ENCODE measurements at regions of chr15 and their contacts with region 1.

Region 1: DNA sequence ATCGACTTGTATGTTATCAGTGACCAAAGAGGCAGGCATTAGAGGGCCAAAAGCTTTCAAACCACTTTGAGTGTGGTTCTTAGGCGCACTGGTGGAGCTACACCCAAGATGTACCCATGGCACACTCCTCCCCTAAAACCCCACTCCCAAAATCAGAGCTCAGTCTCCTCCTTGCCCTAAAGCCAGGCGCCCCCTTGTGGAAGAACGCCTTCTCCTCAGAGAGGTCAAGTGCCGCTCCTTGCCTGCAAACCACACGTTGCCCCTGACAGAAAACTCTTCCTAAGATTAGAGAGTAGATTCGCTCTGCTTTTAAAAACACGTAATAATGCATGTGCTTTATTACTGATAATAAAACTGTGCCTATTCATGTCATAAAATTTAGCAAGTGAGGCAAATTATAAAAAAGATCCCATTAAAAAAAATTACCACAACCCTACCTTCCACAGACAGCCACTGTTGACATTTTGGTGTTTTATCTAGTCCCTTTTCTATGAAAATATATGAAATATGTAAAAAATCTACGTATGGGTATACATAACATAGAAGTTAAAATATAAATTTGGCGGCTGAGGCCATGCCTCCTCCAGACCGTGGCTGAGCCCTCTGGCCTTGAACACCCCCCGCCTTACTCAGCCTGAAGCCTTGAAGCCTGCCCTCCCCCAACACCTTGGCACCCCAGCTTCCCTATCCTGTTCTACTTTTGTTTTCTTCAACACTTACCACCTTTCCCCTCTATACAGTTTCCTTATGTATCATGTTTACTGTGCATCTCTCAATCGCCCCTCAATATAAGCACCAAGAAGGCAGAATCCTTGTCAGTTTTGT is 33.5 kb downstream of the BCL2L10 start:
- DNase-seq: peak; percentile 75 to 90
- ATAC-seq: peak; percentile 69 to 90 (median 78)
- H3K4me3 ChIP-seq: no peak overlapping the region
- H3K27ac ChIP-seq: no peak overlapping the region
- H3K4me1 ChIP-seq: no peaks in the 10 kb centered on the region
- H3K27me3 ChIP-seq: no peaks in the 10 kb centered on the region
- CTCF ChIP-seq: peak; percentile 78

Region 2: GRCh38 chr15:51335538-51336321 is 743.4 kb before region 1 on chr15:
- intact Hi-C with region 1: no loop called
- DNase-seq: no peak
- ATAC-seq: no peak
- H3K4me3 ChIP-seq: no peak overlapping the region
- H3K27ac ChIP-seq: no peak overlapping the region
- H3K4me1 ChIP-seq: no peaks in the 10 kb centered on the region
- H3K27me3 ChIP-seq: peaks cover 0 to 2% (median 0%) of the 10 kb centered on the region in 3 donors
- CTCF ChIP-seq: no peak

Region 3: GRCh38 chr15:51971375-51972133 is 107.5 kb before region 1 on chr15 and contains the start of gene LEO1:
- intact Hi-C with region 1: loop called in 1 of 2 experiments (anchors 5 kb)
- DNase-seq: peak; percentile 87 to 92
- ATAC-seq: peak; percentile 96 to 98 (median 98)
- H3K4me3 ChIP-seq: peak within 1 kb of the TSS; percentile 100
- H3K27ac ChIP-seq: peak within 1 kb of the TSS; percentile 94
- H3K4me1 ChIP-seq: peaks cover 11% of the 10 kb centered on the region
- H3K27me3 ChIP-seq: no peaks in the 10 kb centered on the region
- CTCF ChIP-seq: peak; percentile 45
- total RNA-seq, gene LEO1: 6.2 to 10.2 (median 7.1) TPM

Region 4: DNA sequence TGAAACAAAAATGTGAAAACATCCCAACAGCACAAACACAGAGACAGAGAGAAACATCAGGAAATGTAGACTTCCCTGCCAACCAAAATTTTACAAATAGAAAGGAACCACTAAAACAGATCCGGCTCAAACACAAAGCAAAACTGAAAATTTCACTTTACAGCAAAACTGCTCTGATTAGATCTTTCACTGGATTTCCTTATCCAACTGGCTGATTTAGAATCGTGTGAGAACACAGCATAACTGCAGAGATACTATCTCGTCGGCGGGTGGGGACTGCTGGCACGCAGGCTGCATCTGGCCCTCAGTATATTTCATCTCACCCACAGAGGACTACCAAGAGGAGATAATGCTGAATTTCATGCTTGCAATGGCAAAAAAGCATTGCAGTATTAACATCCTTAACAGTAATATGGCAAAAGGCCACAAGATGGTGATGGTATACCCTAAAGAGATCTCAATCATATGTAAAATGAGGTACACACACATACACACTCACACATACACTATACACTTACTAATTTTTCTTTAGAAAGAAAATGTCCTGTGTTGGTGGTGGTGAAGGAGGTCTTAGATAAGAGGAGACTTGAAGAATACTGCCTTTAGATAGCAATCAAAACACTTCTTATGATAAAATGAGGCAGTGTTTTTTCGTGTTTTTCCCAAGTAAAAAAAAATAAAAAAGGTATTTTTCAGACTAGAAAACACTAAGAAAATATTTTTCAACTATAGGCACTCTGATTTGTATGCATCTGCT is 96.9 kb before region 1 on chr15:
- intact Hi-C with region 1: loop called in 1 of 2 experiments (anchors 5 kb)
- DNase-seq: peak; percentile 25 to 54
- ATAC-seq: peak in 3 of 4 donors; percentile 62 to 78 (median 69)
- H3K4me3 ChIP-seq: peak overlapping the region; percentile 49
- H3K27ac ChIP-seq: peak overlapping the region; percentile 53
- H3K4me1 ChIP-seq: peaks cover 15% of the 10 kb centered on the region
- H3K27me3 ChIP-seq: no peaks in the 10 kb centered on the region
- CTCF ChIP-seq: peak; percentile 34

Region 5: GRCh38 chr15:52018693-52019387 is 60.2 kb before region 1 on chr15 and contains the start of gene MAPK6:
- intact Hi-C with region 1: loop called (anchors 5 to 10 kb)
- DNase-seq: peak; percentile 96 to 97
- ATAC-seq: peak; percentile 89 to 95 (median 92)
- H3K4me3 ChIP-seq: peak within 1 kb of the TSS; percentile 65
- H3K27ac ChIP-seq: peak within 1 kb of the TSS; percentile 83
- H3K4me1 ChIP-seq: peaks cover 32% of the 10 kb centered on the region
- H3K27me3 ChIP-seq: no peaks in the 10 kb centered on the region
- CTCF ChIP-seq: no peak
- total RNA-seq, gene MAPK6: 29.4 to 58.5 (median 47.7) TPM

Region 6: DNA sequence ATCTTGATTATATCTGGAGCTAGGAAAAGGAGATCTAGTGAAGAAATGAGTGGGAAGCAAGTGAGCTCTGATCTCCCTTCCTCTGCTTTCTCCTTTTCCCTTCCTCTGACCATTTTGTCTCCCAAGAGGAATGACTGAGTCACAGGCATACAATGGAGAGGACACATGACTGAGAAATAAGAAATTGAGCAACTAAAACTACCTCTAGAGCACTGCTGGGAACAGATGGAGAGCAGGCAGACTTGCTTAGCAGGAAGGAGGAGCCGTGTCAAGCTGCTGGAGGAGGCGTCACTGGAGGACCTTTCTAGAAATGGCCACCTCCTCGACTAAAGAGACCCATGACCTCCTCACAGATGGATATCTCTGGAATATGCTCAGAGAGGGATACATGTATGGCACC is 283.4 kb after region 1 on chr15:
- intact Hi-C with region 1: no loop called
- DNase-seq: no peak
- ATAC-seq: peak; percentile 27 to 87 (median 81)
- H3K4me3 ChIP-seq: no peak overlapping the region
- H3K27ac ChIP-seq: no peak overlapping the region
- H3K4me1 ChIP-seq: peaks cover 12% of the 10 kb centered on the region
- H3K27me3 ChIP-seq: no peaks in the 10 kb centered on the region
- CTCF ChIP-seq: no peak